Endothelial cell of umbilical vein (primary cell): ENCODE measurements at regions of chr11 and their contacts with region 1.

Region 1: GRCh38 chr11:112588252-112588694 is 327.6 kb upstream of the PLET1 start:
- DNase-seq: peak; percentile 73
- H3K4me3 ChIP-seq: no peak overlapping the region
- H3K27ac ChIP-seq: no peak overlapping the region
- H3K4me1 ChIP-seq: no peaks in the 10 kb centered on the region
- H3K27me3 ChIP-seq: no peaks in the 10 kb centered on the region
- CTCF ChIP-seq: peak; percentile 50 to 54
- POLR2A ChIP-seq: no peak

Region 2: GRCh38 chr11:112289588-112290492 is 298.4 kb before region 1 on chr11:
- CTCF ChIA-PET with region 1: interaction called, 13 read pairs
- POLR2A ChIA-PET with region 1: no interaction called
- dilution Hi-C with region 1: no loop called
- intact Hi-C with region 1: loop called (anchors 1 kb)
- DNase-seq: peak; percentile 52
- H3K4me3 ChIP-seq: peak overlapping the region; percentile 26 to 70 (median 59)
- H3K27ac ChIP-seq: no peak overlapping the region
- H3K4me1 ChIP-seq: peaks cover 29% of the 10 kb centered on the region
- H3K27me3 ChIP-seq: no peaks in the 10 kb centered on the region
- CTCF ChIP-seq: peak; percentile 77 to 82
- POLR2A ChIP-seq: no peak

Region 3: GRCh38 chr11:112548641-112549040 is 39.6 kb before region 1 on chr11:
- CTCF ChIA-PET with region 1: no interaction called
- POLR2A ChIA-PET with region 1: no interaction called
- dilution Hi-C with region 1: no loop called
- intact Hi-C with region 1: no loop called
- DNase-seq: no peak
- H3K4me3 ChIP-seq: no peak overlapping the region
- H3K27ac ChIP-seq: no peak overlapping the region
- H3K4me1 ChIP-seq: no peaks in the 10 kb centered on the region
- H3K27me3 ChIP-seq: no peaks in the 10 kb centered on the region
- CTCF ChIP-seq: no peak
- POLR2A ChIP-seq: no peak

Region 4: DNA sequence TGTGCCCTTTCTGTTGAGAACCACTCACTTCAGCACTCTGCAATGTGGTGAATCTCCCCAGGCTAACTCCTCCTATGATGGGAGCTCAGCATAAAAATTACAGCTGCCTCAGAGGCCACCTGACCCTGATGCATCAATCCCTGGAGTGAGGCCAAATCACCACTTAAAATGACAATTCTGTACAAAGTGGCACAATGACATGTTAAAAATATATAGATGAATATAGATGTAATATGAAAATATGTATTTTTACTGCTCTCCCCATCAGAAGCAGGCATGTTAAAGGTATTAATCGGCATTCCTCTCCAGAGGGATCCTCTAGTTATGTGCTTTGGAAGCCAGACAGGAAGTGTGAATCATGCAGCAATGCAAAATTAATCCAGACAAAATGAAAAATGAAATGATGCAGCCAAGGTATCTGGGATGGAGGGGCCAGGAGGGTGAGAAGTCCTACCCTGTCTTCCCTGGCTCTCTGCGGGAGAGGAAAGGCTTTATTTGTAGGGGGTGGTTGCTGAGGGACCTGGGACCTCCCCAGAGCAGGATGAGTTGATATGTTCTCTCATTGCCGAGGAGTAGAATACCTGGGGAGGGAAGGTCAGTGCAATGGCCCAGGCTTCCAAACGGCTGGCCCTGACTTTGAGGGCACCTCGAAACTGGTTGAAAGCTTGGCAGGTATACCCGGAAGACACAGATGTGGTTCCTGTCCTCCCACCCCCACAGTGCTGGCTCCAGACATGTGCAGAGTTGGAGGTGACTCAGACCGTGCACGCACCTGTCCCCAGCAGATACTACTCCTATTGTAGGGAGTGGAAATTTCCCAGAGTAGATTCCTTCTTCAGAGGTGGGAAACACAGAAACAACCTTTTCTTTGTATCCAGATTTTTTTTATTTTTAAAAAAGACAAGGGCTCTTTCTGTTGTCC is 25.0 kb after region 1 on chr11:
- CTCF ChIA-PET with region 1: interaction called, 11 read pairs
- POLR2A ChIA-PET with region 1: no interaction called
- dilution Hi-C with region 1: no loop called
- intact Hi-C with region 1: no loop called
- DNase-seq: peak; percentile 58
- H3K4me3 ChIP-seq: no peak overlapping the region
- H3K27ac ChIP-seq: peak overlapping the region; percentile 10
- H3K4me1 ChIP-seq: peaks cover 29% of the 10 kb centered on the region
- H3K27me3 ChIP-seq: no peaks in the 10 kb centered on the region
- CTCF ChIP-seq: no peak
- POLR2A ChIP-seq: no peak

Region 5: GRCh38 chr11:112961146-112961668 is 372.9 kb after region 1 on chr11 and contains the start of gene NCAM1:
- CTCF ChIA-PET with region 1: interaction called, 3 read pairs
- POLR2A ChIA-PET with region 1: no interaction called
- dilution Hi-C with region 1: no loop called
- intact Hi-C with region 1: loop called (anchors 10 kb)
- DNase-seq: peak; percentile 34
- H3K4me3 ChIP-seq: peak within 1 kb of the TSS; percentile 14 to 28 (median 27)
- H3K27ac ChIP-seq: no peak within 1 kb of the TSS
- H3K4me1 ChIP-seq: peaks cover 13% of the 10 kb centered on the region
- H3K27me3 ChIP-seq: peaks cover 26 to 46% of the 10 kb centered on the region in 2 experiments
- CTCF ChIP-seq: no peak
- POLR2A ChIP-seq: no peak
- total RNA-seq, gene NCAM1: not detected in 2 replicates

Region 6: GRCh38 chr11:113281052-113281725 is 692.9 kb after region 1 on chr11:
- CTCF ChIA-PET with region 1: interaction called, 401 read pairs
- POLR2A ChIA-PET with region 1: no interaction called
- dilution Hi-C with region 1: no loop called
- intact Hi-C with region 1: no loop called
- DNase-seq: no peak
- H3K4me3 ChIP-seq: no peak overlapping the region
- H3K27ac ChIP-seq: no peak overlapping the region
- H3K4me1 ChIP-seq: no peaks in the 10 kb centered on the region
- H3K27me3 ChIP-seq: no peaks in the 10 kb centered on the region
- CTCF ChIP-seq: no peak
- POLR2A ChIP-seq: no peak

Region 7: GRCh38 chr11:113532697-113533424 is 944.6 kb after region 1 on chr11:
- CTCF ChIA-PET with region 1: interaction called, 4 read pairs
- POLR2A ChIA-PET with region 1: no interaction called
- dilution Hi-C with region 1: no loop called
- intact Hi-C with region 1: loop called (anchors 10 kb)
- DNase-seq: peak; percentile 64
- H3K4me3 ChIP-seq: no peak overlapping the region
- H3K27ac ChIP-seq: no peak overlapping the region
- H3K4me1 ChIP-seq: no peaks in the 10 kb centered on the region
- H3K27me3 ChIP-seq: no peaks in the 10 kb centered on the region
- CTCF ChIP-seq: peak; percentile 75 to 86
- POLR2A ChIP-seq: no peak